IMR-90 (cell line): ENCODE measurements at regions of chr5 and their contacts with region 1.

Region 1: DNA sequence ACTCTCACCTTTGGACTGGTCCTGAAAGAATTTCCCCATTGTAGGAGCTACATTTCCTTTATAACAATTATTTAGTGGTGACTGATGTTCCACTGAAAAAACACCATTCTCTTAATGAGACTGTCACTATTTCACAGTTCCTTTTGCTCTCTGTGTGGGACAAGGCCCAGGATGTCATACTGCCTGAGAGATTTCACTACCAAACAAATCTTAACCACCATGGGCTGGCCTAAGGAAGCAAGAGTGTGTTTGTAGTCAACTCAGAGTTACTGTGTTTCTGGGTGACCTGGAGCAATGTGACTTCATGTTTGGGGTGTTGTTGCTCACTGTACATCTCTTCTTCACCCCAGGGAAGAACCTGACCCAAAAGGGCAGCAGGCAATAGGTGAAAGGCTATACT is 50.1 kb upstream of the ZNF608 start:
- DNase-seq: no peak
- ATAC-seq: no peak
- H3K4me3 ChIP-seq: no peak overlapping the region
- H3K27ac ChIP-seq: no peak overlapping the region
- H3K4me1 ChIP-seq: no peaks in the 10 kb centered on the region
- H3K27me3 ChIP-seq: peaks cover 2% of the 10 kb centered on the region; the same call in 1 of the 2 replicates
- CTCF ChIP-seq: no peak
- POLR2A ChIP-seq: no peak
- RAD21 ChIP-seq: no peak

Region 2: GRCh38 chr5:124867137-124867704 is 70.7 kb after region 1 on chr5:
- CTCF ChIA-PET with region 1: no interaction called
- POLR2A ChIA-PET with region 1: no interaction called
- dilution Hi-C with region 1: no loop called
- in situ Hi-C with region 1: no loop called
- intact Hi-C with region 1: no loop called
- DNase-seq: peak; percentile 37
- ATAC-seq: no peak
- H3K4me3 ChIP-seq: no peak overlapping the region
- H3K27ac ChIP-seq: no peak overlapping the region
- H3K4me1 ChIP-seq: peaks cover 4% of the 10 kb centered on the region
- H3K27me3 ChIP-seq: no peaks in the 10 kb centered on the region
- CTCF ChIP-seq: no peak
- POLR2A ChIP-seq: no peak
- RAD21 ChIP-seq: no peak

Region 3: DNA sequence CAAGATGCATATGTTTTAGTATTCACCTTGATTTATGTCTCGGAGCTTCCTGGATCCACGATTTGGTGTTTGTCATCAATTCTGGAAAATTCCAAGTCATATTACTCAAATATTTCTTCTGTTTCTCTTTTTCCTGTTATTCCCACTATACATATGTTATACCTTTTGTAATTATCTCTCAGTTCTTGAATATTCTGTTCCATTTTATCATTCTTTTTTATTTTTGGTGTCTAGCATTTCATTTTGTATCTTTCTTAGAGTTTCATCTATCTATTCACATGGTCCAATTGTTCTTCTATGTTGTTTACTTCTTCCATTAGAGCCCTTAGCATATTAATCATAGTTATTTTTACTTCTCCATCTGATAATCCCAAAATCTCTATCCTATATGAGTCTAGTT is 988.9 kb after region 1 on chr5:
- CTCF ChIA-PET with region 1: no interaction called
- POLR2A ChIA-PET with region 1: interaction called, 16 read pairs
- dilution Hi-C with region 1: no loop called
- in situ Hi-C with region 1: no loop called
- intact Hi-C with region 1: no loop called
- DNase-seq: no peak
- ATAC-seq: no peak
- H3K4me3 ChIP-seq: no peak overlapping the region
- H3K27ac ChIP-seq: no peak overlapping the region
- H3K4me1 ChIP-seq: no peaks in the 10 kb centered on the region
- H3K27me3 ChIP-seq: no peaks in the 10 kb centered on the region
- CTCF ChIP-seq: no peak
- POLR2A ChIP-seq: no peak
- RAD21 ChIP-seq: no peak